ENCODE measurements at regions of chr22 and their contacts with region 1.

Region 1: GRCh38 chr22:39268645-39269044 is 23.9 kb upstream of the PDGFB start:
- DNase-seq: no peak
- ATAC-seq: no peak
- H3K4me3 ChIP-seq: no peak overlapping the region
- H3K27ac ChIP-seq: peak overlapping the region; percentile 34; the same call in 1 of the 2 replicates
- H3K4me1 ChIP-seq: 0 out of 2 replicates have a peak, but pooled peaks cover 2% of the 10 kb centered on the region
- H3K27me3 ChIP-seq: no peaks in the 10 kb centered on the region
- CTCF ChIP-seq: no peak

Region 2: DNA sequence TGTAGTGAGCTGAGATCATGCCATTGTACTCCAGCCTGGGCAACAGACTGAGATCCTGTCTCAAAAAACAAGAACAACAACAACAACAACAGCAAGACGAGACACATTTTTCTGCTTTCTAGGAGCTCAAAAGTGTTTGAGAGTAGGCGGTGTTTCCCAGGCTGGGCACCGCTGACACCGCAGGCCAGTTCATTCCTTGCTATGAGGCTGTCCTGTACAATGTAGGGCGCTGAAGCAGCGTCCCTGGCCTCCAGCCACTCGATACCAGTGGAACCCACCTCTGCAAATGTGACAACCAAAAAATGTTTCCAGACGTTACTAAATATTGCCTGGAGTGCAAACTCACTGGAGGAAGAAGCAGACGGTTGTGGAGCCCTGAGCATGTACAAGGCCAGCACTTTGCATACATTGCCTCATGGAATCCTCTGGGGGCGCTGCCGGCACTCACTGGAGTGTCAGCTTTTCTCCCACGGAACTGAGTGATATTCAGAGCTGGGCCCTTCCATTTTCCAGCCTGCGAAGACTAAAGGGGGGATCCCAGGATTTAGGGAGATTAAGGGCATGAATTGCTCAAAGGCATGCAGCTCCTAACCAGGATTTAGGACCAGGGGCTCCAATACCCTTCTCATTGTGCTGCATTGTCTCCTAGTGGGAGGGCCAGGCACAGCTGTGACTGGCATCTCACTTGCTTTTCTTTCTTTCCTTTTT is 227.6 kb after region 1 on chr22:
- CTCF ChIA-PET with region 1: no interaction called
- POLR2A ChIA-PET with region 1: interaction called, 13 read pairs
- in situ Hi-C with region 1: no loop called
- intact Hi-C with region 1: no loop called
- DNase-seq: no peak
- ATAC-seq: peak; percentile 84
- H3K4me3 ChIP-seq: no peak overlapping the region
- H3K27ac ChIP-seq: no peak overlapping the region
- H3K4me1 ChIP-seq: peaks cover 5% of the 10 kb centered on the region
- H3K27me3 ChIP-seq: no peaks in the 10 kb centered on the region
- CTCF ChIP-seq: peak; percentile 85

Measured in Panc1 (cell line).